HepG2 (cell line): ENCODE measurements at regions of chr6 and their contacts with region 1.

Region 1: DNA sequence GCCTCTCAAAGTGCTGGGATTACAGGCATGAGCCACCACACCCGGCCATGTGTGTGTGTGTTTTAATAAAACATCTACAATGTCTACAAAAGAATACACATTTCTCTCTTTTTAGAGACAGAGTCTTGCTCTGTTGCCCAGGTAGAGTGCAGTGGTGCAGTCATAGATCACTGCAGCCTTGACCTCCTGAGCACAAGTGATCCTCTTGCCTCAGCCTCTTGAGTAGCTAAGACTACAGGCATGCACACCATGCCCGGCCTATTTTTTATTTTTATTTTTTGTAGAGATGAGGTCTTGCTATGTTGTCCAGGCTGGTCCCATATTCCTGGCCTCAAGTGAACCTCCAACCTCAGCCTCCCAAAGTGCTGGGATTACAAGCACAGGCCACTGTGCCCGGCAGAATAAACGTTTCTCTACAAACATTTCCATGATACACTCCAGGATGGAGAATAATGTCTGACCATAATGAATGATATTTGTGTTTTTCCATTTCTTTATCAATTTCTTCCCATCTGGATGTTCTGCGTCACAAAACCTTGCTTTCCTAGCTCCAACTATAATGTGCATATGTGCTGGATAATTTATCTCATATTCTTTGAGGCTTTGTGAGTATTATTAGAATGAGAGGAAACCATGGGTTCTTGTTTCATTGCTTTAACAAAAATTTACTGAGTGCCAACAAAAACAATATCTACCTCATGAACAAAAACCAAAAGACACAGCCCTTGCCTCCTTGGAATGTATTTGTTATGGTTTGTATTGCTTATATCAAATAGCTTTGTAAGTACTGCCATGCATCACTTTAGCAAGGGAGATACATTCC is 28.6 kb upstream of the CCN2 start:
- DNase-seq: no peak
- ATAC-seq: no peak
- H3K4me3 ChIP-seq: no peak overlapping the region
- H3K27ac ChIP-seq: peak overlapping the region; percentile 98
- H3K4me1 ChIP-seq: peaks cover 97% of the 10 kb centered on the region
- H3K27me3 ChIP-seq: no peaks in the 10 kb centered on the region
- CTCF ChIP-seq: no peak
- EP300 ChIP-seq: no peak
- POLR2A ChIP-seq: no peak
- RAD21 ChIP-seq: no peak

Region 2: DNA sequence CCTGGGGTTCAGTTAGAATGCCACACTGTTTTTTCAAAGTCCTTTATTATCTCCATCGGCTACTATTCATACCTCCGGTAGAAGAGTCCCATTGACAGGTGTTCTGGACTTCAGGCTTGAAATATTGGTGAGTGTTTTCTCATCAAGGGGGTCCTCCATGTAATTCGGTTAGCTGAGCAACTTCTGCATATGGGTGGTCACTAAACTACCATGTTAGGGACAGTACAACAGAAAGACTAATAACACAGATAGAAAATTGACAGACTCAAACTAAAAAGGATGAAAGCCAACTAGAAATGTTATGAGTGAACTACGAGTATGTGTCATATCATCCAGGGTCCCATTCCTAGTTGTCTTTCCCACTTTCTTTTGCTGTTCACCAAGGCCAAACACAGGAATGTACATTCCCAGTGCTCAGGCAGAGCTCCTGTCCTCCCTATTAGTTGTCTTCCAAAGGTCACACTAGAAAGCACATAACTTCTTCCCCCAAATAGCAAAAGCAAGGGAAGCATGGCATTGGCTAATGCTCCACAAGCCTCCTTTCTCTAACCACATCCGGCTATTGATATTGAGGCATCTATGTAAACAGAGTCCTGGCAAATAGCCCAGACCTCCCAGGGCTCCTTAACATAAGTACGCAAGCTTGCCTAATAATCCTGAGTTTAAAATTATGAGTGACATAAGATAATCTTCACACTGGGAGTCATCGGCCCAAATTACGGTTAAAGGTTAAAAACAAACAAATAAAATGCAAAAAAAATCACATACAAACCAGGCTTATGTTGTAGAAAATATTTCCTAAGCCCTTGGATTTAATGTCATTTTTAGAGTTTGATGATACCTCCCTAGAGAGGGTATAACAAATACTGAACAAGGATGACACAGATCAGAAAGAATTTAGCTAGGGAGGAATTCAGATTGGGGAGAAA is 41.8 kb before region 1 on chr6:
- CTCF ChIA-PET with region 1: no interaction called
- POLR2A ChIA-PET with region 1: interaction called, 19 read pairs
- in situ Hi-C with region 1: no loop called
- intact Hi-C with region 1: loop called (anchors 1 kb)
- DNase-seq: peak; percentile 100
- ATAC-seq: peak; percentile 98
- H3K4me3 ChIP-seq: peak overlapping the region in 1 of 3 experiments; percentile 7; a peak in 1 of 6 replicates
- H3K27ac ChIP-seq: peak overlapping the region; percentile 56
- H3K4me1 ChIP-seq: peaks cover 46% of the 10 kb centered on the region
- H3K27me3 ChIP-seq: no peaks in the 10 kb centered on the region
- CTCF ChIP-seq: no peak
- EP300 ChIP-seq: peak; percentile 40 to 97; a peak in 3 of 4 replicates
- POLR2A ChIP-seq: no peak
- RAD21 ChIP-seq: no peak

Region 3: DNA sequence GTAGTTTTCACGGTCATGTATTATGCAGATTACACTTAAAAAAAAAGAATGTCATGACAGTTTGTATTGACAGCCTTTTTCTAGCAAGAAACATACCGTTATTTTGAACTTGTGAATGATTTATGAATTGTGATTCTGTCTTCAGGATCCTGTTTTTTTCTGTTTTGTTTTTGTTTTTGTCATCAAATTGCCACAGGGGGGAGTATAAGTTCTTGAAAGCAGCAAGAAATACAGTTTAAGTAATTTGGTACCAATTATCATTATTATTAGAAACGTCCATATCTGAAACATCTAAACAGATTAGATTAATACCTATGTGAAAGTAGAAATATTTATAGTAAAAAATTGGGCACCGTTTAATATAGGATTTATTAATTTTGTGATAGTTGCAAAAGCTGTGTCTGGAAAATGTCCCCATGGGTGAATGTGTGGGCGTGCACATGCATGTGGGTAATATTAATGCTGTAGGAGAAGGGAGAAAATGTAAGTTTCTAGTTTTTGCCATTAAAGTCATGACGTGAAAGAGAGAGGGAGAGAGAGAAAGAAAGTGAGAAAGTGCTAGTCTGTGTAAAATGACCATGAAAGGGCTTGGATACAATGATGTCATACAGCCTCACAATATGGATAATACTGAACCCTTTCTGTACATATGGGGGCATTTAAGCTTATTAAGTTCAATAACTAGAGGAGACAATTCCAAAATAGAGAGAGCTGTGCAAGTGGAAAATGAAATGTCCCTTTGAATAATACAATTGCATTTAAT is 19.2 kb before region 1 on chr6:
- CTCF ChIA-PET with region 1: interaction called, 4 read pairs
- POLR2A ChIA-PET with region 1: interaction called, 59 read pairs
- in situ Hi-C with region 1: no loop called
- intact Hi-C with region 1: loop called (anchors 1 kb)
- DNase-seq: no peak
- ATAC-seq: no peak
- H3K4me3 ChIP-seq: no peak overlapping the region
- H3K27ac ChIP-seq: peak overlapping the region; percentile 83
- H3K4me1 ChIP-seq: peaks cover 76% of the 10 kb centered on the region
- H3K27me3 ChIP-seq: no peaks in the 10 kb centered on the region
- CTCF ChIP-seq: peak; percentile 40
- EP300 ChIP-seq: no peak
- POLR2A ChIP-seq: no peak
- RAD21 ChIP-seq: no peak

Region 4: DNA sequence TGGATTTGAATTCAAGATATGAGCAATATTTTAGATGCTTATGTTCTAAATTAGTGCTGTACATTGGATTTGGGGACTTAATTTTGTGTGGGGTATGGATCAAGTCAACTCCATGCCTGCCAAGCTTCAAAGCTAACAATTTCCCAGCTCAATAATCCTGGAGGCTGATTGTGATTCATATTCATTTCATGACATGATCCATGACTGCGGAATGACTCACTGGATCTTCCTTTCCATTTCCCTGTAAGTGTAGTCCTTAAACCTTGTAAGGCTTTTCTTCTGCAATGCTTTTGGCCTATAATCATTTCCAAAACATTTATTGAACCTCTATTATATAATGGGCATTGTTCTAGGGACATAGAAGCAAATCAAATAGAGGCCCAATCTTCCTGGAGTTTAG is 16.2 kb after region 1 on chr6:
- CTCF ChIA-PET with region 1: no interaction called
- POLR2A ChIA-PET with region 1: interaction called, 18 read pairs
- in situ Hi-C with region 1: no loop called
- intact Hi-C with region 1: no loop called
- DNase-seq: no peak
- ATAC-seq: no peak
- H3K4me3 ChIP-seq: no peak overlapping the region
- H3K27ac ChIP-seq: no peak overlapping the region
- H3K4me1 ChIP-seq: peaks cover 25% of the 10 kb centered on the region
- H3K27me3 ChIP-seq: no peaks in the 10 kb centered on the region
- CTCF ChIP-seq: no peak
- EP300 ChIP-seq: no peak
- POLR2A ChIP-seq: no peak
- RAD21 ChIP-seq: no peak

Region 5: GRCh38 chr6:132020138-132020581 is 40.4 kb after region 1 on chr6:
- CTCF ChIA-PET with region 1: no interaction called
- POLR2A ChIA-PET with region 1: interaction called, 22 read pairs
- in situ Hi-C with region 1: loop called (anchors 5 kb)
- intact Hi-C with region 1: loop called (anchors 1 kb)
- DNase-seq: no peak
- ATAC-seq: no peak; the same call in 2 of the 3 replicates
- H3K4me3 ChIP-seq: no peak overlapping the region
- H3K27ac ChIP-seq: peak overlapping the region; percentile 25
- H3K4me1 ChIP-seq: peaks cover 44% of the 10 kb centered on the region
- H3K27me3 ChIP-seq: no peaks in the 10 kb centered on the region
- CTCF ChIP-seq: no peak
- EP300 ChIP-seq: no peak
- POLR2A ChIP-seq: no peak
- RAD21 ChIP-seq: no peak

Region 6: DNA sequence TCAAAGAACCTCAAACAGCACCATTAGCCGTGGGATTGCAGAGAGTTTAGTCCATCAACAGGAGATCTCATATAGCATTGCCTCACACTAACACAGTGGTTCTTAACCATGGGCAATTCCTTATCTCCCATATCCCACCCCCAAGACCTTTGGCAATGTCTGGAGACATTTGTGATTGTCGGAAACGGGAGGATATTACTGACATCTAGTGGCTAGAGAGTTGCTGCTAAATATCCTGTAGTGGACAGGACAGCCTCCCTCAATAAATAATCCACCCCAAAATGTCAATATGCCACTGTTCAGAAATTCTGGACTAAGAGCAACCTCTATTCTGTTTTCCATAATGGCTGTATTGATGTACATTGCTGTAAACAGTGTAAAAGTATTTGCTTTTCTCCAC is 181.6 kb after region 1 on chr6:
- CTCF ChIA-PET with region 1: no interaction called
- POLR2A ChIA-PET with region 1: no interaction called
- in situ Hi-C with region 1: no loop called
- intact Hi-C with region 1: loop called (anchors 1 kb)
- DNase-seq: peak; percentile 45
- ATAC-seq: peak; percentile 86
- H3K4me3 ChIP-seq: no peak overlapping the region
- H3K27ac ChIP-seq: no peak overlapping the region
- H3K4me1 ChIP-seq: peaks cover 7% of the 10 kb centered on the region; the same call in 1 of the 2 replicates
- H3K27me3 ChIP-seq: no peaks in the 10 kb centered on the region
- CTCF ChIP-seq: peak; percentile 90
- EP300 ChIP-seq: no peak
- POLR2A ChIP-seq: no peak
- RAD21 ChIP-seq: peak; percentile 84